ENCODE measurements at regions of chr11 and their contacts with region 1.

Region 1: DNA sequence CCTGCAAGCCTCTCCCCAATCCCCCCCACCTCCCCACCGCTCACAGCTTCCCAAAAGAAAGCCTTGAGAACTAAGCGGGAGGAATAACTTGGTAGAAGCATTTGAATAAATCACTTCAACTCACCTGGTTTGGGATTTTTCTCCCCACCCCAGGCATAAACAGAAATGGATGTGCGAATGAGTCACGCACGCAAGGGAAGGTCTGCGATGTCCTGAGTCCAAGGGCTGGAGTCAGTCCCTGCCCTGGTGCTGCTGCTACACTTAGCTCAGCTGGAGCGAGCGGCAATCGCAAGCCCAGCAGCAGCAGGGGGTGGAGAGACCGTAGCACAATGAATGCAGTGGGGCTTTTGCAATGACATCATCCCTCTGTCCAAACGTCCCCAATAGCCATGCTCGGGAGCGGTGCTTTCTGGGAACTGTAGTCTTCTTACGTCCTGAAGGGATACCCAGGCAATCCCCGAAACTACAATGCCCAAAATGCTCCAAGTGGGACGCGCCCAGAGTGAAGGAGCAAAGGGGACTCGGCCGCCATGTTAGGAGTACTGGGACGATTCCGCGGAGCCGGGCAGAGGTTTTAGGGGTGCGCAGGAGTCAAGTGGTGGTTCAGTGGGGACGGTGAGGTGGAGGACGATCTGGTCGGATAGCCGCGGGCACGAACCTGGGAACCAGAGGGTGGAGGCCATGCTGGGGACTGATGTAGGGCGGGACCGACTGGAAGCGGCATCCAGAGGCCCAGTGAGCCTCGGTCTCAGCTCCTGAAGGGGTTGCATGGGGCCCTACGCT is at the start of gene RAB30:
- DNase-seq: peak; percentile 99
- ATAC-seq: peak; percentile 88
- H3K4me3 ChIP-seq: peak within 1 kb of the TSS; percentile 97
- H3K27ac ChIP-seq: peak within 1 kb of the TSS; percentile 92
- H3K4me1 ChIP-seq: peaks cover 16% of the 10 kb centered on the region
- H3K27me3 ChIP-seq: no peaks in the 10 kb centered on the region
- CTCF ChIP-seq: no peak
- EP300 ChIP-seq: no peak
- POLR2A ChIP-seq: peak; percentile 93
- RAD21 ChIP-seq: peak; percentile 33; the same call in 1 of the 2 replicates
- polyA plus RNA-seq, gene RAB30: 9.8 to 14.2 TPM

Region 2: DNA sequence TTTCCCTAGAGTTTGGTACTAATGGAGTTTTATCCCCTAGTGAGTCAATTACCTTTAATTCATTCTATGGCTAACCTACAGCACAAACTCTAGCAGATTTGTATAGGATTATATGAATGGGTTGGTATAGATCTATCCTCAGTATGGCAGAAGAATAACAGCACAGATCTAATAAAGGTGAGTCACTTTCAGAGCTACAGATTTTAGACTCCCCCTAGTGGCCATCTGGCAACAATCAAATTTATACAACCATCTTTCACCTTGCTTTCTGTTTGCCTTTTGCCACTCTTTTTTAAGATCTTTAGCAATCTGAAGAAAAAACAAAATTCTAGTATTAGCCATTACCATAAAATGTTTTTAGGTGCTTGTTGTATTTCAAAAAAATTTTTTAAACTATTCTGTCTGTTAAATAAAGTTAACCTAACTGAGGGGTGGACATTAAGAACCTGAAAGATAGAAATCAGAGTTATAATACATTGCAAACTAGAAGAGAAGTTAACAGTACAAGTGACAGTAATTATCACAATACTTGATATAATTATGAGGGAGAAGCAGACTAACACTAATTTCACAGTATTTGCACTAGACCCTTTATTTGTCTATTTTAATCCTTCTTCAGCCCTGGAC is 144.4 kb before region 1 on chr11:
- CTCF ChIA-PET with region 1: interaction called, 8 read pairs
- POLR2A ChIA-PET with region 1: no interaction called
- RAD21 ChIA-PET with region 1: interaction called, 13 read pairs
- SMC1A ChIA-PET with region 1: interaction called, 7 read pairs
- in situ Hi-C with region 1: no loop called
- intact Hi-C with region 1: loop called (anchors 2 kb)
- DNase-seq: no peak
- ATAC-seq: peak; percentile 93
- H3K4me3 ChIP-seq: no peak overlapping the region
- H3K27ac ChIP-seq: no peak overlapping the region; the same call in 1 of the 2 replicates
- H3K4me1 ChIP-seq: peaks cover 20% of the 10 kb centered on the region
- H3K27me3 ChIP-seq: no peaks in the 10 kb centered on the region
- CTCF ChIP-seq: peak; percentile 73 to 77 (median 76)
- EP300 ChIP-seq: no peak
- POLR2A ChIP-seq: no peak
- RAD21 ChIP-seq: peak; percentile 63

Region 3: DNA sequence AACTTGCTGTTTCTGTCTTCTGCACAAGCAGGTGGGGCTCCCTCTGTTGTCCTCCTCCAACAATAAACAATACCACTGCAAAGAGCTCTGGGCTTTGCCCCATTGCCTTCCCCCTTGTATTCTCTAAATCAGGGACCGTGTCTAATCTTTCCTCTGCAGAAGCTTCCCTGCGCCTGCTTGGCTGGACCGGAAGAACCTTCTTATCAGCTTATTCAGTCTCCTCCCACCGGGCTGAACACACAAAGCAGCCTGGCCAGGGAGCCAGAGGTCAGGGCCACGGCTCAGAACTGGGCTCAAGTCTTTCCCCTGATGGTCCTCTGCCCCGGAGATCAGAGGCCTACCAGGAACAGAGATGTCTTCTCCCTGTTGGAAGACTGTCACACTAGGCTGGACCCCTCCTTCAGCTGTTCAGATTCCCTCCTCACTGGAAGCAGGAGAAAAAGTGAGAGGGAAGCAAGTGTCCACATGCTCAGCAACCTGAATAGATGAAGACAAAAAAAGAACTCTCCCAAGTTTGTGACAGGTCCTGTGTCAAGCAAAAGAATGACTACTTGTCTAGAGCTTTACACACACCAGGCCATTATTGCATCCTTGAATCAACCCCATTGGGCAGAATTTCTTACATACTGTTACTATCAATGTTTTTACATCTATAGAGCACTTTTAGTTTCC is 63.7 kb before region 1 on chr11:
- CTCF ChIA-PET with region 1: interaction called, 10 read pairs
- POLR2A ChIA-PET with region 1: interaction called, 12 read pairs
- RAD21 ChIA-PET with region 1: interaction called, 12 read pairs
- SMC1A ChIA-PET with region 1: interaction called, 46 read pairs
- in situ Hi-C with region 1: no loop called
- intact Hi-C with region 1: loop called (anchors 2 kb)
- DNase-seq: no peak
- ATAC-seq: peak; percentile 73
- H3K4me3 ChIP-seq: peak overlapping the region; percentile 24; the same call in 1 of the 2 replicates
- H3K27ac ChIP-seq: peak overlapping the region; percentile 67
- H3K4me1 ChIP-seq: peaks cover 26% of the 10 kb centered on the region
- H3K27me3 ChIP-seq: no peaks in the 10 kb centered on the region
- CTCF ChIP-seq: peak in 1 of 3 experiments; percentile 10; a peak in 1 of 6 replicates
- EP300 ChIP-seq: no peak
- POLR2A ChIP-seq: no peak
- RAD21 ChIP-seq: no peak

Region 4: GRCh38 chr11:83051760-83052671 is 19.7 kb before region 1 on chr11:
- CTCF ChIA-PET with region 1: interaction called, 3 read pairs
- POLR2A ChIA-PET with region 1: interaction called, 14 read pairs
- RAD21 ChIA-PET with region 1: interaction called, 6 read pairs
- SMC1A ChIA-PET with region 1: interaction called, 20 read pairs
- in situ Hi-C with region 1: no loop called
- intact Hi-C with region 1: no loop called
- DNase-seq: no peak
- ATAC-seq: no peak
- H3K4me3 ChIP-seq: no peak overlapping the region
- H3K27ac ChIP-seq: no peak overlapping the region
- H3K4me1 ChIP-seq: peaks cover 40% of the 10 kb centered on the region
- H3K27me3 ChIP-seq: no peaks in the 10 kb centered on the region
- CTCF ChIP-seq: no peak
- EP300 ChIP-seq: no peak
- POLR2A ChIP-seq: no peak
- RAD21 ChIP-seq: no peak

Region 5: DNA sequence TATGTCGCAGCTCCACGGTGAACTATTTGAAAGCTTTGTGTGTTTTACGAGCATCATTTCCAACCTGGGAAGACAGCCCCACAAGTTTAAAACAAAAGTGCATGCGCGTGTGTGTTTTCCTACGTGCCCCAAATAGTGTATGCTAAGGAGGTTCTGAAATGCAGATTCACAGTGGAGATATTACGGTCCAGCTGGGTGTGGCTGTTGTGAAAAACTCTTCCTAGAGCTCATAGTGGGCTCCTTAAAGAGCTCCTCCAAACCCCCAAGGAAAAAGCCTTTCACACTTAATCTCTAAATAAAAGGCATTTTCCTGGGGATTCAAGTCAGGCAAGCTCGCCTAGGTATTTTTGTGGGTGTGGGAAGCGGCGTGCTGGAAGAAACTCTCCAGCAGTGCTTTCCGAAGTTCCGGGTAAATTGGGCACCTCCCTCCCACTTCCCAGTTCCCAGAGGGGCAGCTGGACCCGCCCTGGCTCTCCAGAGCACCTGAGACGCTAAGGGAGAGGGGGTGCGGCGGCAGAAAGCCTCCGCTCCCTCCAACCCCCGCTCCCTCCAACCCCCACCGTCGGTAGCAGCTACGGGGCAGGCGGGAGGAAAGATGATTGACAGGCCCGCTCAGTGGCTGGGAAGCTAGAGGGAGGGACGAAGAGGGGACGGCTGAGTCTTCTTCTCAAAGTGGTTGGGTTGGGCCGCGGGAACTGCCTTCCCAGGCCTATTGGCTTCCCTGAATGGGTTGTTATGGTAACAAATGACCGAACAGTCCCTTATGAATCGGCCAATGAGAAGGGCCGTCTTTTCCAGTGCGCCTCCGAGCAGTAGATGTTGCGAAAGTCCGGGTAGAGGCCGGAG is 84.6 kb after region 1 on chr11:
- CTCF ChIA-PET with region 1: interaction called, 4 read pairs
- POLR2A ChIA-PET with region 1: interaction called, 42 read pairs
- RAD21 ChIA-PET with region 1: interaction called, 27 read pairs
- SMC1A ChIA-PET with region 1: interaction called, 48 read pairs
- in situ Hi-C with region 1: loop called (anchors 5 kb)
- intact Hi-C with region 1: loop called (anchors 2 kb)
- DNase-seq: peak; percentile 100
- ATAC-seq: peak; percentile 89
- H3K4me3 ChIP-seq: peak overlapping the region; percentile 80
- H3K27ac ChIP-seq: peak overlapping the region; percentile 85
- H3K4me1 ChIP-seq: peaks cover 3% of the 10 kb centered on the region; the same call in 1 of the 2 replicates
- H3K27me3 ChIP-seq: no peaks in the 10 kb centered on the region
- CTCF ChIP-seq: no peak
- EP300 ChIP-seq: no peak; a peak in 1 of 4 replicates
- POLR2A ChIP-seq: no peak
- RAD21 ChIP-seq: no peak

Region 6: DNA sequence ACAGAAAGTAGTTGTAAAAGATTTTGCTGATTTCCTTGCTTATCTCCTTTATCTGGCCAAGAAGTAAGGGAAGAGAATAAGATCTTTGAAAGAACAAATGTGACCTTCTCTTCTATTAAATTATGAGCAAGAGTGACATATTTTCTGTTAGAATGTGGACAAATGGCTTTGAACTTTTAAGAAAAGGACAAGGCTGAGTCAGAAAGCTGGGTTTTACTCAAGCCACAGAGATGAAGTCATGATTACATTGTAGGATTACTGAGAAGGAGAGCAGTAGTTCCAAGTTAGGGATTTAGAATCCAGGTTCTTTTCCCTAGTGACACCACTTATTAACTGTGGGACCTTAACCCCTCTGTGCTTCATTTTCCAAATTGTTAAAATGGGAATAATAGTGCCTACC is 200.9 kb after region 1 on chr11:
- CTCF ChIA-PET with region 1: no interaction called
- POLR2A ChIA-PET with region 1: no interaction called
- RAD21 ChIA-PET with region 1: no interaction called
- SMC1A ChIA-PET with region 1: no interaction called
- in situ Hi-C with region 1: no loop called
- intact Hi-C with region 1: no loop called
- DNase-seq: no peak
- ATAC-seq: no peak
- H3K4me3 ChIP-seq: no peak overlapping the region
- H3K27ac ChIP-seq: no peak overlapping the region
- H3K4me1 ChIP-seq: no peaks in the 10 kb centered on the region
- H3K27me3 ChIP-seq: no peaks in the 10 kb centered on the region
- CTCF ChIP-seq: no peak
- EP300 ChIP-seq: no peak
- POLR2A ChIP-seq: no peak
- RAD21 ChIP-seq: no peak

Measured in GM12878 (cell line).